H1 (cell line): ENCODE measurements at regions of chr3 and their contacts with region 1.

Region 1: GRCh38 chr3:13495921-13496723 is 16.0 kb downstream of the HDAC11 start:
- DNase-seq: peak; percentile 54 to 91
- H3K4me3 ChIP-seq: no peak overlapping the region
- H3K27ac ChIP-seq: no peak overlapping the region
- H3K4me1 ChIP-seq: peaks cover 0 to 3% (median 1%) of the 10 kb centered on the region in 4 experiments; a peak in 2 of 7 replicates
- H3K27me3 ChIP-seq: no peaks in the 10 kb centered on the region
- CTCF ChIP-seq: peak in 2 of 3 experiments; percentile 98; a peak in 3 of 4 replicates
- EP300 ChIP-seq: no peak
- POLR2A ChIP-seq: no peak
- RAD21 ChIP-seq: peak; percentile 99 to 100

Region 2: DNA sequence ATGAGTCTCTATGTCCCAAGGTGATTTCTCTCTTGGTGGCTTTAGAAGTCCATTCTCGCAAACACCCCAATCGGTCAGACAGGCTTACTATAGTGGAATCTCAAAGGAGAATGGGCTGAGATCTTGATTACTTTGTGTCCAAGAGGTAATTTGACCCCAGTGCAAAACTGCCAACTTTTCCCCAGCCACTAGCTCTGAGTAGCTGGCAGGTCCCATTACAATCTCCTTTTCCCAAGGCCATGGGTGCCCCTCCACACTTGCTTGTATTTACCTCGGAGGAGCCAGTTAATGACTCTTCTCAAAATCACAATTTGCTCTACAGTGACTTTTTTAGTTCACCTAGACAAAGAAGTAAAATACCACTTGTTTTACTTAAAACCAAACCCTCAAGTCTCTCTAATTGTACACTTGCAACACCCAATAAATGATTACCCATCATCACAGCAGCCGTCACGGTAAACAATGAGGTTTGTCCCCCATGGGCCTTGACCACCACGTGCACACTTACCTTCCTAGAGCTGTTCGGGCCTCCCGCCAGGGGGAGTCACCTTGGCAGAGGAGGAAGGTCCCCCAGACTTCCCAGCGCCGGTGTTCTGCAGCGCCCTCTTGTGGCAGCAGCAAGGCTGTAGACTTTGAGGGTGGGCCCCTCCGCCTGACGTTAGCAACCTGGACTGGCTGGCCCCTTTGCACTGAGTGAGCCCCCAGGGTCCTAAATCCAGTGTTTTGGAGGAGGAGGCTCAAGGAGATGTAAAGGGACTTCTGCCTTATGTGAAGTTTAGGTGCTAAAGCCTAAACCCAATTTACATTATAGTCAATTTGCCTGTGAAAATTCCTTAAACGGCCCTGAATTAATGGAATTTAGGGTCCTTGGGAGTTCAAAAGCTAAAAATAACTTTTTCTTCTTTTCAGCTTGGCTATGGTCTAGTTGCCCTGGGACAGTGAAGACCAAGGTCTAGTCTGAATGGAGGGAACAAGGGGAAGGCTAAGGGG is 34.7 kb before region 1 on chr3:
- CTCF ChIA-PET with region 1: interaction called, 12 read pairs
- POLR2A ChIA-PET with region 1: no interaction called
- DNase-seq: peak; percentile 90 to 97
- H3K4me3 ChIP-seq: no peak overlapping the region
- H3K27ac ChIP-seq: no peak overlapping the region
- H3K4me1 ChIP-seq: peaks cover 0 to 2% (median 0%) of the 10 kb centered on the region in 4 experiments; a peak in 2 of 7 replicates
- H3K27me3 ChIP-seq: peaks cover 3 to 10% (median 9%) of the 10 kb centered on the region in 4 experiments; a peak in 6 of 7 replicates
- CTCF ChIP-seq: peak; percentile 97 to 100 (median 99)
- EP300 ChIP-seq: 0 out of 3 replicates have a peak, but pooled peaks of 1 of the 2 experiments have one; percentile 20
- POLR2A ChIP-seq: no peak
- RAD21 ChIP-seq: peak; percentile 86 to 92

Region 3: DNA sequence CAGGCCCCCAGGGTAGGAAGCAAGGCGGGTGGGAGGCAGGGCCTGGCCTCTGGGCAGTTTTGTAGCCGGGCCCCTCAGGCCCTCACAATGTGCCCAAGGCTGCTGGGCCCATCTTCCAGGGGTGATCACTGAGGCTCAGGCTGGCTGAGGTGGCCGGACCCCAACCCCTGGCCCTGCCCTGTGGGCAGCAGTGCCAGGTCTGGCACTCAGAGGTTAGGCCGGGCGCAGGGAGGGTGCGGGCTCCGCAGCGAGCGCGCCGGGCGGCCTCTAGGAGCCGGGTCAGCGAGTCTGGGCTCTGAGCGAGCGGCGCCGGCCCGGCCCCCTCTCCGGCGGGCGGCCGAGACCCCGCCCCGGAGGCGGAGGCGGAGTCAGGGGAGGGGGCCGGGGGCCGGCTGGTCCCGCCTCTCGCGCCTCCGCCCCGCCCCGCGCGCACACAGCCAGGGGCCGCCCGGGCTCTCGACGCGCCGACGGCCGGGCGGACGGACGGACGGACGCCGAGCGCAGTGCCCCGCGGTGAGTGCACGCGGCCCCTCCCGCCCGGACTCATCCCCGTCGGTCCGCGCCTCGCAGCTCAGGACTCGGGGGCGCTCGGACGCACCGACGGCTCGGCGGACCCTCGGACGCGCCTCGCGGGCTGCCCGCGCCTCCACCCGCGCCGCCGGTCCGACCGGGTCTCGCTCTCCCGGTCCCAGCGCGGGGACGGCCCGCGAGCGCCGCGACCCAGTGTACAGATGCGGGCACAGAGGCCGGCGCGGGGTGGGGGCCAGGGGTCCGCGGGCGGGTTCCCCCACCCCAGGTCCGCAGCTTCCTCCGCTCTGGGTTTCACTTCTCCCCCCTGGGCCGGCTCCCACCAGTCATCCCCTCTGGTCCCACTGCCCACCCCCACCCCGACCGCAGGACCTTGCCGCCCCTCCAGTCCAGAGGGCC is 52.8 kb after region 1 on chr3 and contains the start of gene FBLN2:
- CTCF ChIA-PET with region 1: interaction called, 856 read pairs
- POLR2A ChIA-PET with region 1: no interaction called
- DNase-seq: peak in 1 of 2 experiments; percentile 86
- H3K4me3 ChIP-seq: peak within 1 kb of the TSS; percentile 32 to 55 (median 42)
- H3K27ac ChIP-seq: no peak within 1 kb of the TSS
- H3K4me1 ChIP-seq: peaks cover 0 to 28% (median 11%) of the 10 kb centered on the region in 4 experiments; a peak in 6 of 7 replicates
- H3K27me3 ChIP-seq: peaks cover 0 to 22% (median 18%) of the 10 kb centered on the region in 4 experiments; a peak in 6 of 7 replicates
- CTCF ChIP-seq: no peak
- EP300 ChIP-seq: no peak
- POLR2A ChIP-seq: peak in 1 of 2 experiments; percentile 24; a peak in 1 of 3 replicates
- RAD21 ChIP-seq: no peak
- total RNA-seq, gene FBLN2: 15.5 and 17.4 TPM in 2 replicates

Region 4: DNA sequence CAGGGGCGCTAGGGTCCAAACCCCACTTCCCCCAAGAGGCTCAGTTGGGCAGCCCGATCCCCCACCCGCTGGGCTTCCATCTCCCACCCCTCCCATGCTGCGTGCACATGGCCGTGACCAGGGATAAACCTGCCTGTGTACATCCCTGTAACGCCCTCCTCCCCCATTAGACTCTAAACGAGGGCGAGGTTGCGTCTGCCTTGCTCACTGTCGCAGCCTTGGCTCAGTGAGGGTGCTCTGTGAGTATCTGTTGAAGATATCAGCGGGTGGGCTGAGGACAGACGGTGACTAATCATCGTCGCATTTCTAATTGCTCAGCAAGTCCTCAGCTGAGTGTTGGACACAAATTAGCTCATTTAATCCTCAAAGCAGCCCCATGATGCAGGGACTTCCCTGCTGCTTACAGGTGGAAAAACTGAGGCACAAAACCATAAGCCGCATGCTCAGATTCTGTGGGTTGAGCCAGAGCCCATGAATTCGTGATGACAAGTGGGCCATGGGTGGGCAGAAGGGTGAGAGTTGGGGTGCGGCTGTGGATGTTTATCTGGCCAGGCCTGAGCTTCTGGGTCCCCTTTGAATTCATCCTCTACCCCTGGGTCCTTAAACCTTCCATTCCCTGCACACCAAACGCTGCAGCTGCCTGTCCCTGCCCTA is 78.8 kb after region 1 on chr3:
- CTCF ChIA-PET with region 1: interaction called, 18 read pairs
- POLR2A ChIA-PET with region 1: no interaction called
- DNase-seq: no peak
- H3K4me3 ChIP-seq: no peak overlapping the region
- H3K27ac ChIP-seq: no peak overlapping the region
- H3K4me1 ChIP-seq: peaks cover 0 to 23% (median 9%) of the 10 kb centered on the region in 4 experiments; a peak in 5 of 7 replicates
- H3K27me3 ChIP-seq: no peaks in the 10 kb centered on the region; a peak in 1 of 7 replicates
- CTCF ChIP-seq: no peak
- EP300 ChIP-seq: no peak
- POLR2A ChIP-seq: no peak
- RAD21 ChIP-seq: no peak

Region 5: DNA sequence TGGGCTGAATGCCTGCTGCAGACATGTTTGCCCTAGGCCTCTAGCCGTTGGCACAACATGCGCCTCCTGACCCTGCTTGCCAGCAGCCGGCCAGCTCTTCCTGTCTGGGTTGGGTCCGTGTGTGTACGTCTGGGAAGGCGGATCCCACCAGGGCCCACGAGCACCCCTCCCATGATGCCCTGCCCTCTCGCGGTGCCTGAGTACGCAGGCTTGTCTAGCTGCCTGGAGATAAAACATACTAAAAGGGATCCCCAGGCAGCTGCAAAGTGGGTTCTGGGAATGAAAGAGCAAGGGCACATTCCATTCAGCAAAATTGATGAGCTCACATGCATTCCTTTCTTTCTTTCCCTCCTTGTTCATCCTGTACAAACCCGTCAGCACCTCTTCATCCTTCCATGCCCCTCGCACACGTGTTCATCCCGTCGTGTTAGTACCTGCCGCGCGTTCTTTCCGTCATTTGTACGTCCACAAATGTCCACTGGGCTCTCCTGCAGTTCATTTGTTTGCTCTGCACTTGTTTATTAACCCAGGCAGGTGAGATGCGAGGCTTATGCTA is 127.1 kb after region 1 on chr3:
- CTCF ChIA-PET with region 1: interaction called, 28 read pairs
- POLR2A ChIA-PET with region 1: no interaction called
- DNase-seq: no peak
- H3K4me3 ChIP-seq: no peak overlapping the region
- H3K27ac ChIP-seq: no peak overlapping the region
- H3K4me1 ChIP-seq: peaks cover 0 to 7% (median 3%) of the 10 kb centered on the region in 4 experiments; a peak in 3 of 7 replicates
- H3K27me3 ChIP-seq: no peaks in the 10 kb centered on the region
- CTCF ChIP-seq: no peak
- EP300 ChIP-seq: no peak
- POLR2A ChIP-seq: no peak
- RAD21 ChIP-seq: no peak

Region 6: DNA sequence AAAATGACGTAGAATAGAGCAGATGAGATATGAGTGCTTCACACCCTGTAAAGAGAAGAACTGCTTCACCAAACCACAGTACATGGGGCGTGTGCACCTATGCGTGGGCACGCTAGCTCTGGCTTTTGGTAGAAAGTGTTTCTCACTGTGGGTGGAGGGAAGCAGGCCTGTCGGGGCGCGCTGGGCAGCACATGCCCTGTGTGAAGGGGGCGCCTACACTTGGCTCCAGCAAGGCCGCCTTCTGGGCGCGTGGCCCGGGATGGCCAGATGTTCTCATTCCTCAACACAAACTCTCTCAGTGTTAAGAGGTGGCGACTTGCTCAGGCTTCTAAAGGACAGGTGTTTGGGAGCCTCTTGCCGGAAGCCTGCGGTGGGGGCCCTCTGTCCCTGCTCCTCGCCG is 142.8 kb after region 1 on chr3:
- CTCF ChIA-PET with region 1: interaction called, 772 read pairs
- POLR2A ChIA-PET with region 1: no interaction called
- DNase-seq: no peak
- H3K4me3 ChIP-seq: no peak overlapping the region
- H3K27ac ChIP-seq: no peak overlapping the region
- H3K4me1 ChIP-seq: no peaks in the 10 kb centered on the region; a peak in 1 of 7 replicates
- H3K27me3 ChIP-seq: no peaks in the 10 kb centered on the region
- CTCF ChIP-seq: no peak
- EP300 ChIP-seq: no peak
- POLR2A ChIP-seq: no peak
- RAD21 ChIP-seq: no peak

Region 7: GRCh38 chr3:13727890-13728289 is 231.8 kb after region 1 on chr3:
- CTCF ChIA-PET with region 1: no interaction called
- POLR2A ChIA-PET with region 1: no interaction called
- DNase-seq: peak in 1 of 2 experiments; percentile 49
- H3K4me3 ChIP-seq: peak overlapping the region in 1 of 4 experiments; percentile 12; a peak in 1 of 8 replicates
- H3K27ac ChIP-seq: no peak overlapping the region
- H3K4me1 ChIP-seq: peaks cover 0 to 7% (median 3%) of the 10 kb centered on the region in 4 experiments; a peak in 3 of 7 replicates
- H3K27me3 ChIP-seq: no peaks in the 10 kb centered on the region; a peak in 1 of 7 replicates
- CTCF ChIP-seq: no peak
- EP300 ChIP-seq: no peak
- POLR2A ChIP-seq: no peak
- RAD21 ChIP-seq: no peak